ENCODE measurements at regions of chr11 and their contacts with region 1.

Region 1: GRCh38 chr11:58796333-58796732 is 48.2 kb downstream of the GLYATL2 start:
- DNase-seq: no peak
- ATAC-seq: no peak
- H3K4me3 ChIP-seq: no peak overlapping the region
- H3K27ac ChIP-seq: no peak overlapping the region
- H3K4me1 ChIP-seq: no peaks in the 10 kb centered on the region
- H3K27me3 ChIP-seq: peaks cover 0 to 10% (median 0%) of the 10 kb centered on the region in 7 donors
- CTCF ChIP-seq: no peak

Region 2: DNA sequence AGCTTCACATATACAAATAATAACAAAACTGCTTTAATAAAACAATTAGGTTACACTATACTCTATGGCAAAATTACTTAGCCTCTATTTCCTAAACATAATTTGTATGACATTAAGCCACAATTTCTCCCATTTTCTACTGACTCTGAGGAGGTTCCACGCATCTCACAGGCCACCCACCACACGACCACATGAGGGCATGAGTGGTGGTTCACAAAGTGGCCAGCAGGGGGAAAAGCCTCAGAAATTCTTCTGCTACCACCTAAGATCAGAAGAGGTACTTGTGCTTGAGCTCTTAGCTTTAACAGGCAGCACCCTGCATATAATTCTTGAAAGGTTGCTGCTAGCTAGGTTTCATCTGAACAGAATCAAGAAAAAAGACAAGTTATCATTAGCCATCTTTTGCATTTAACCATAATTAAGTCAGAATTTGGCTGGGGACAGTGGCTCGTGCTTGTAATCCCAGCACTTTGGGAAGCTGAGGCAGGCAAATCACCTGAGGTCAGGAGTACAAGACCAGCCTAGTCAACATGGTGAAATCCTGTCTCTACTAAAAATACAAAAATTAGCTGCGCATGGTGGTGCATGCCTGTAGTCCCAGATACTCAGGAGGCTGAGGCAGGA is 228.3 kb before region 1 on chr11:
- intact Hi-C with region 1: loop called in 1 of 10 experiments (anchors 10 kb)
- DNase-seq: peak in 1 of 2 donors; percentile 31
- ATAC-seq: peak in 3 of 8 donors; percentile 46 to 62 (median 56)
- H3K4me3 ChIP-seq: no peak overlapping the region
- H3K27ac ChIP-seq: no peak overlapping the region
- H3K4me1 ChIP-seq: peaks cover 0 to 10% (median 1%) of the 10 kb centered on the region in 9 donors
- H3K27me3 ChIP-seq: no peaks in the 10 kb centered on the region
- CTCF ChIP-seq: peak; percentile 31 to 82 (median 70)

Measured in heart right ventricle (tissue), 16 donors.